HAP-1 (cell line): ENCODE measurements at regions of chr10 and their contacts with region 1.

Region 1: DNA sequence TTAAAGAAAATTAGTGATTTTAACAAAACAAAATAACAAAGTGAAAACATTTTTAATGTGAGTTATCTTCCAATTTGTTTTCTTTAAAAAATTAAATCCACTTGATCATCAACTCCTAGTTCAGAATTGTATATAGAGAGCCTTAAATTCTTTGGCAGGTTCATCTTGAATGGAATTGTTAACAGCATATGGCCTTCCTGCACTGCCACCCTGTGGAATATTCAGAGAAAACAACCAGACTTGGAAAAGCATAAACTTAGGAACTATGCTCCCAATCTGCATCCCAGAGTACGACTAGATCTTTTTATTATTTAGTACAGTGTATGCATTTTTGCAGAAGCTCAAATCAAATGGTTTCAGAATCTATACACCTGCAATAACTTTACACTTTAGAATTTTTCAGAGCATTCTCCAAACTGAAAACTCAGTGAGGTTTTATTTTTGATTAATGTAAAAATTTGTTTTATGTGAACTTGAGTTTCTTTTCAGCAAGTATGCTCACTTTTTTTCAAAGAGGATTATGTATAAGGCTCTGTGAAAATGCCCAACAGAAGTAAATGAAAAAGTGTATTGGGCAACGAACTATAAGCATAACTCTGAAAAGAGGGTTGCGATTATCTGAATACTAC is 44.9 kb upstream of the ANK3 start:
- DNase-seq: peak; percentile 64 to 78
- H3K4me3 ChIP-seq: no peak overlapping the region
- H3K4me1 ChIP-seq: no peaks in the 10 kb centered on the region
- H3K27me3 ChIP-seq: no peaks in the 10 kb centered on the region

Region 2: DNA sequence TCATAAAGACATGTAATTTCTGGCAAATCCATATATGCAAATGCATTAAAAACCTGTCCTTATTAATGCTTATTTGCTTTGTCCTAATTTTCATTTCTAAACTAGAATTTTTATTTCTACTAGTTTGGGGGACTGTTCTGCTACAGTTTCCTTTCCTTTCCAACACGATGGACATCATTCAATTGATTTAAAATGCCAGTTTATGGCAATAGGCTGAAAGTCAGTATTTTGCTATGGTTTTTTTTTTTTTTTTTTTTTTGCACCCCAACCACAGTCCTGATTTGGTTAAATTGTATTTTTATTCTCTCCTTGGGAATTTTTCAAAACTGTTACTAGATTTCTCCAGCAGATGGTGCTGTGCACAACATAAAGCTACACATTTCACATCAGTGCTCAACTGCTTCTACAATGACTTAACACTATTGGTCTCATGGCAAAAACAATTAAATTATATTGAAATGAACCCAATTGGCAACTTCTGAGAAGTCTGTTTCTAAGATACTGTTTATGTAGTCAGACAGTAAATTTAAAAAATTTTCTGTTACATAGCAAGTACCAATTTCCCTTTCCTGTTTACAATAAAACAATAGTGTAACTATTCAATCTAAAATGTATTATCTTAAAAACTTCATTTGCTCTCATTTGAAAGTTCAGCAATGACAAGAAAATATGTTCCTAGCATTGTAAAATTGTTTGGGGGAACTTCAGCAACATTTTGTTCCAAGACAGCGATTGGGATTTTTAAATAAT is 334.4 kb before region 1 on chr10:
- in situ Hi-C with region 1: loop called (anchors 10 kb)
- DNase-seq: peak; percentile 42 to 64
- H3K4me3 ChIP-seq: no peak overlapping the region
- H3K4me1 ChIP-seq: peaks cover 22% of the 10 kb centered on the region
- H3K27me3 ChIP-seq: no peaks in the 10 kb centered on the region

Region 3: GRCh38 chr10:60208676-60209269 is 225.8 kb before region 1 on chr10:
- in situ Hi-C with region 1: loop called (anchors 10 kb)
- DNase-seq: peak in 1 of 2 experiments; percentile 54
- H3K4me3 ChIP-seq: no peak overlapping the region
- H3K4me1 ChIP-seq: no peaks in the 10 kb centered on the region
- H3K27me3 ChIP-seq: peaks cover 24% of the 10 kb centered on the region

Region 4: GRCh38 chr10:60618861-60619260 is 184.3 kb after region 1 on chr10:
- in situ Hi-C with region 1: no loop called
- DNase-seq: no peak
- H3K4me3 ChIP-seq: no peak overlapping the region
- H3K4me1 ChIP-seq: no peaks in the 10 kb centered on the region
- H3K27me3 ChIP-seq: no peaks in the 10 kb centered on the region; the same call in 1 of the 2 replicates

Region 5: DNA sequence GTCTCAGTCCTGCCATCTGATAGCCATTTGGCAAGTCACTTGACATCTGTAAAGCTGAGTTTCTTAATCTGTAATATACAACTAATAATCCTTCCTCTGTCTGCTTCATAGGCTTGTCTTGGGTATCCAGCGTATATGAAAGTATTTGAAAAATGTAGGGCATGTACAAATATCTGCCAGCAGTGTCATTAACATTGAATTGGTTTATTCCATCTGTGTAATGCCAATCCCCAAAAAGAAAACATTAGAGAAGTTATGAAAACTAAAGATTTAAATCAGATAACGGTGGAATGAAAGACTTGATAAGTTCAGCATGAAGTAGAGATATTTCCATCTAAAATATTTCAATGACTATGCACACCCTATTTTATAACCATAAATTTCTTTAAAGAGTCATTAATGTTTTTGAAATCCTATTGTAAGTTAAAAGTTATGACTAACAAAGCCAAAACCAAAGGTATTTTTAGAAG is 1843.9 kb after region 1 on chr10:
- in situ Hi-C with region 1: no loop called
- DNase-seq: no peak
- H3K4me3 ChIP-seq: no peak overlapping the region
- H3K4me1 ChIP-seq: no peaks in the 10 kb centered on the region
- H3K27me3 ChIP-seq: no peaks in the 10 kb centered on the region; the same call in 1 of the 2 replicates